Gastrocnemius medialis (tissue), 4 donors: ENCODE measurements at regions of chrX and their contacts with region 1.

Region 1: DNA sequence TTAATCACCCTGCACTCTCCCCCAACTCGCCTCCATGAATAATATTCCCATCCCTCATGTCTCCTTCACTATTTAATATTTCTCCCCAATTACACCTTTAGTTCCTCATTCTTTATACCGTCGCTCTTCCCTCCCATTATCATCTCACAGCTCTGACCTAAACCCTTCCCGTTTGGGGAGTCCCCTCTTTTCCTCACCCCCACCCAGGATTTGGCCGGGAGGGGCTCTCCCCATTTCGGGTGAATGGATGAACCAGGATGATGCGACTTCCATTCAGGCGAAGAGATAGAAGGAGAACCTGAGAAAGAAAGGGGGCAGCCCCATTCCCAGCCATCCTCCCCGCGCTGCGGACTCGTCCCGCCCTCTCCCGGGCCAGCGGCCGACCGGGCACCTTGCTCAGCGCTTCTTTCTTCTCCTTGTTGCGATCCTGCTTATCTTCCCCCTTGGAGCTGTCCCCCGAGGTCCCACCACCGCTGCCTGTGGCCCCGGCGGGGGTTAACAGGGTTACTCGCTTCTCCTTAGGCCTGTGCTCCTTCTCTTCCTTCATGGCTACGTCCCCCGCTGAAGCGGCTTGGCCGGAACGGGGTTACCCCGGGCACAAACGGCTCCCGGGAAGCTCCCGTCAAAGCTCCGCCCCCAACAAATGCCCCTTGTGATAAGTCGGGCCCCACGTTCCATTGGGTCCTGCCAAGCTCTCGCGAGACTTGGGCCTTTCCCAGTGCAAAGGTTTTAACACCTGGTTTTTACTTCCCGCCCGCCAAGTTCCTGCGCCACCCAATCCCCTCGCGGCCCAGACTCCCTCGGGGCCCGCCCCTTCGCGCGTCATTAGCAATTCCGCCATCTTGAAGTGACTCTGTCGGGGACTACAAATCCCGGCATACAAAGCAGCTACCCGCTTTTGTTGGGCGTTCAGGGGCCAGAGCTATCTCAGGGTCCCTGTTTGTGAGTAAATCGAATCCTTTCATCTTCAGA is at the start of gene UPF3B:
- DNase-seq: peak; percentile 95 to 97
- ATAC-seq: peak; percentile 98 to 99
- H3K4me3 ChIP-seq: peak within 1 kb of the TSS; percentile 75 to 87 (median 76)
- H3K27ac ChIP-seq: peak within 1 kb of the TSS; percentile 89 to 95 (median 93)
- H3K4me1 ChIP-seq: no peaks in the 10 kb centered on the region
- H3K27me3 ChIP-seq: no peaks in the 10 kb centered on the region
- CTCF ChIP-seq: no peak
- POLR2A ChIP-seq: peak; percentile 22 to 71
- total RNA-seq, gene UPF3B: 4.7 to 6.3 (median 5.7) TPM

Region 2: DNA sequence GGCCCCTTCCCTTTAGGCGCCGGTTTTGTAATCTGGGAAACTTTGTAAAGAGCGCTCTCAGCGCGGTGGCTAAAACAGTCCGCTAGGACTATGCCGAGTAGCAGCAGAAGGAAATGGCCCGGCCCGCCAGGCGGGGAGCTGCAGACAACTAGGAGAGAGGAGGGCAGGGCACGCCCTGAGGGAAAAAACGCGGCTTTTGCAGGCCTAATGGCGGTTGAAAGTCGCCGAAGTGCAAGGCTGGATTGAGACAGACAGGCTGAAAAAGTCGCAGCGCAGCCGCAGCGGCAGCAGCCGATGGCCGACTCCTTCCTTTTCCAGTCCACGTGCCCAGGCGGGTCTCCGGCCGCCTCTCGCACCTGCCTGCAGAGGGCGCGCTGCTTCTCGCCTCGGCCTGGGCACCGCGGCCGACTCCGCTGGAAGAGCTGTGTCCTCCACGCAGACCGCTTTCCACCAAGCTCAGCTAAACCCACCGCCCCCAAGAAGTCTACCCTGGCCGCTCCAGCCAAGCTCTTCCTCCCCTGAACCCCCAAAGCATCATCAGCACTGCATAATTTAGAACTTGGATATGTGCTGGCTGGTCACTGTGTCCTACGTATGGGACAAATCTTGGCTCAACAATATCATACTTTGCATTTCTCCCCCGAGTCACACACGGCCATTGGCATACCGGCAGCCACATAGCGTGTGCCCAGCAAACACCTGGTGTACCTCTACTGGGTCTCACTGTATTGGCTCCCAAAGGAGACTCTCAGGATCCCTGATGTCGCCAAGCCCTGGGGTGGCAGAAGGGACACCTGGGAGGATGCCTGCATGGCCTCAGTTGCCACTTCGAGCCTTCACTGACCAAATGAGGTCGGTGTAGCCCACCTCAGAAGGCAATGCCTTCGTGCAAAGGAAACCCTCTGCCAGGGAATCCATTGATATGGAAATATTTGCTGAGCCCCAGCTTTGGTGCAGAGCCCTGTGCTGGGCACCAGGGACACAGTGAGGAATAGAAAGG is 369.9 kb before region 1 on chrX:
- in situ Hi-C with region 1: no loop called
- intact Hi-C with region 1: loop called (anchors 2 kb)
- DNase-seq: peak; percentile 15 to 56
- ATAC-seq: peak; percentile 58 to 72
- H3K4me3 ChIP-seq: peak overlapping the region; percentile 49 to 58 (median 54)
- H3K27ac ChIP-seq: peak overlapping the region; percentile 59 to 83 (median 78)
- H3K4me1 ChIP-seq: peaks cover 0 to 4% of the 10 kb centered on the region in 2 donors
- H3K27me3 ChIP-seq: no peaks in the 10 kb centered on the region
- CTCF ChIP-seq: peak; percentile 42 to 78 (median 65)
- POLR2A ChIP-seq: no peak

Region 3: DNA sequence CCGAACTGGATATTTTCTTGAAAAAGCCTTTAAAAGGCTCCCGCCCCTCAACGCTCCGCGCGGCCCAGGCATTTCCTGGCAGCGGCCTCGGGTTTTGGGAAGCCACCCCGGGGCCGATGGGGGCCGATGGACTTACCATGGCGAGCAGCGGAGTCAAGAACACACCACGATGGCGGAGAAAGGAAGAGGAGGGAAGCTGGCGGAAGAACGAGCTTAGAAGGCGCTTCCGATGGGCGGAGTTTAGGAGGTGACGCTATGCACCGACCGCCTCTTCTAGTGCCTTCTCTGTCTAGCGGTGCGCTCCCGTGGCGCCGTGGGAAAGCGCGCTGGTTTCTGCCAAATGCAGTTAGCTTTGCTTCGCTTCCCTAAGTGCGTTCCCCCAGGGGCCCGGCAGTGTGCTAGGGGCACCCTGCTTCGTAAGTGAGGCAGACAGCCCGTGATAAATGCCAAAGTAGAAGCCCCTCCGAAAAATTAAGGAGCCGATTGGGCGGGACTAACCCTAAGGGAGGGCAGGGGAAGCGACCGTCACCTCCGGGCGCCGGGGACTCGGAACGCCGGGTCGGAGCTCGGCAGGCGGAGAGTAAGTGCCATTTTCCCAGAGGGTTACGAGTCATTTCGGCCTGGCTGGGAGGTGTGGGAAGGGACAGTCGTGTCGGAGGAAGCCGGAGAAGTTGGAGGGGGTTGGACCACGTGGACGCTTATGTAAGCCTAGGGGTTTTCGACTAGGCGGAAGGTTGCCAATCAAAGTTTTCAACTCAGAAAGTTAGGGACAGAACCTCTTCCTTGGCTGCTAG is 61.0 kb before region 1 on chrX and contains the start of gene RPL39:
- in situ Hi-C with region 1: no loop called
- intact Hi-C with region 1: loop called (anchors 1 kb)
- DNase-seq: peak; percentile 71 to 80
- ATAC-seq: peak; percentile 98
- H3K4me3 ChIP-seq: peak within 1 kb of the TSS; percentile 76 to 95 (median 82)
- H3K27ac ChIP-seq: peak within 1 kb of the TSS; percentile 94 to 96 (median 96)
- H3K4me1 ChIP-seq: peaks cover 14 to 26% of the 10 kb centered on the region in 2 donors
- H3K27me3 ChIP-seq: no peaks in the 10 kb centered on the region
- CTCF ChIP-seq: no peak
- POLR2A ChIP-seq: peak; percentile 72 to 86
- total RNA-seq, gene RPL39: 3,033 to 5,904 (median 3,913) TPM